Right ventricle myocardium inferior (tissue), 1 donor: ENCODE measurements at regions of chr14 and their contacts with region 1.

Region 1: DNA sequence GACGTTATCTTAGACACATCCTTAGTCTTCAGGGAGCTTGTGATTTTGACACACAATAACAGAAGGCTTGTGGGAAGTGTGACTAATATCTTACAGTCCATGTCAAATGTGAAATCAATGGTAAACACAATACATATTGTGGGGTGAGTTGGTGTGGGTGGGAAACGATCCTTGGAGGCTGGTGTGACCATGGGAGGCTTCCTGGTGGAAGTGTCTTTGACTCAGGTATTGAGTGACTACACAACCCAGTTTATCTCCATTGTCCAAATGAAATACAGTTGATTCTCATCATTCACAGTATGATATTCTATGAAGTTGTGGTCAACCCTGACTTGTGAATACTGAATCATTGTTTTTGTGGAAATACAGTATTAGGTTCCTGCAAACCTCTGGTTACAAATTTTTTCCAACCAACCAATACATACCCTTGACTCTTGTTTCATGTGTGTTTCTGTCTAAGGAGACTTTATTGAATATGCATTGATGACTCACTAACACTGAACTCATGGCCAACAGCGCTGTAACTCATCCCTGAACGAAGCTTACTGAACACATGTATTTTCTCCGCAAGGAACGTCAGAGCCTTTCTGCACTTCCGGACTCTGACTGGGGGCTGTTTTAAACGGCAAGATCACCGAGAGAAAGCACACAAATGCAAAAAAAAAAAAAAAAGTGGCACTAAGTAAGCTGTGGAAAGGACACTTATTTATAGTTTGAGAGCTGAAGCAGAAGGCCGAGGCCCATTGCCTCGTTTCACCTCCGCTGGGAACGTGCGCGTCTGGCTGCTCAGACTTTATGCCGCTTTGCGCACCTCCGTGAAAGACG is 59.0 kb downstream of the CLMN start:
- DNase-seq: no peak
- ATAC-seq: peak; percentile 41

Region 2: GRCh38 chr14:95157327-95158189 is 103.2 kb before region 1 on chr14 and contains the start of gene DICER1:
- intact Hi-C with region 1: loop called (anchors 2 kb)
- DNase-seq: peak; percentile 97
- ATAC-seq: peak; percentile 99
- total RNA-seq, gene DICER1: 20.7 TPM

Region 3: DNA sequence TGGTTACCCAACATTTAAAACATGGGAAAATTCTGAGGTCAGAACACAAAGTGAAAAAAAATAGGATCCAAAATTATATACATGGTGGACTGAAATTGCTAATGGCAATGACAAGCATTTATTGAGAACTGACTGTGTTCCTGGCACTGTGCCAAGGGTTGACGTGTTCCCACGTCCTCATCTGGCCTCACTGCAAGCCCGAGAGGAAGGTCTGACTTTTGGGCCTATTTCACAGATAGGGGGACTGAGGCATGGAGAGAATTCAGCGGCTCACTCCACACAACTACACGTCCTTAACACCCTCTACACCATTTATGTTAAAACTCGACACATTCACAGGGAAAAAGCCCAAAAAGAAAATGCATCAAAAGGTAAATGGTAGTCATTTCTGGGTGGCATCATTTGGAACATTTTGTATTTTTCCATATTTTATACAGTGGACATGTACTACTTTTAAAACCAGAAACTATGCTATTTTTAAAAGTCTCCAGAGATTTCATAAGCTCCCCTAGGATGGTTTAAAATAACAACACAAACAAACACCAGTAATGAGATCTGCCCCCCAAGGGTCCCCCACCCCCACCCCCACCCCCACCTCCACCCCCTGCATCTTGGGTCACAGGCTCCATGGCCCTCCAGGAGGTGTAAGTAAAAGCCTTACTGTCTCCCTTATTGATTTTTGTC is 31.3 kb after region 1 on chr14:
- intact Hi-C with region 1: no loop called
- DNase-seq: peak; percentile 84
- ATAC-seq: peak; percentile 45

Region 4: DNA sequence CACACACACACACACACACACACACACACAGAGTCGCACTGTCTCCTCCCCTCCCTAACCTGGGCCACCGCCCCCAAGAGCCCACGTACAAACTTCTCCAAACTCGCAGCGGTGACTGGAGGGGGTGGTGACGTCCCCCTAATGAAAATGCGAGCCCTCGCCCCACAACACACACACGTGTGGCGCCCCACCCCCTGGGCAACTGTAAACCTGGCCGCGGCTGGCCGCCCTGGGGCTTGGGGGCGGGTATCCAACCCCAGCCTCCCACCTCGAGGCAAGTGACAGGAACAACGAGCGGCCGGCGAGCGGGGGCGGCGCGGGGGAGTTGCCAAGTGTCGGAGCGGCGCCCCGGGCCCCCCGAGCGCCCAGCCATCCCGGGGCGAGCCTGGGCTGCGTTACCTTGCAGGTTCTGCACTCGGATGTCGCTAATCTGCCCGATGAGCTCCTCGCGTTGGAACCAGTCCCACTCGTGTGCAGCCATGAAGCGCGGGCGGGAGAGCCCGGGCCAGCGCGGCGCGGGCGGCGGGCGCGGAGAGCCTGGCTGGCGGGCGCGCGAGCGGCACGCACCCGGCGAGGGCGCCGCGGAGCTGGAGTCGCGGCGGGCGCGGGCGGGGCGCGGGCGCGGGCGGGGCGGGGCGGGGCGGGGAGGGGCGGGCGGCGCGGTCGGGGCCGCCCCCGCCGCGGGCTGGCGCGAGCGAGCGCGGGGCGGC is 58.7 kb after region 1 on chr14 and contains the start of gene CLMN:
- intact Hi-C with region 1: no loop called
- DNase-seq: no peak
- ATAC-seq: peak; percentile 51
- total RNA-seq, gene CLMN: 7.6 TPM

Region 5: DNA sequence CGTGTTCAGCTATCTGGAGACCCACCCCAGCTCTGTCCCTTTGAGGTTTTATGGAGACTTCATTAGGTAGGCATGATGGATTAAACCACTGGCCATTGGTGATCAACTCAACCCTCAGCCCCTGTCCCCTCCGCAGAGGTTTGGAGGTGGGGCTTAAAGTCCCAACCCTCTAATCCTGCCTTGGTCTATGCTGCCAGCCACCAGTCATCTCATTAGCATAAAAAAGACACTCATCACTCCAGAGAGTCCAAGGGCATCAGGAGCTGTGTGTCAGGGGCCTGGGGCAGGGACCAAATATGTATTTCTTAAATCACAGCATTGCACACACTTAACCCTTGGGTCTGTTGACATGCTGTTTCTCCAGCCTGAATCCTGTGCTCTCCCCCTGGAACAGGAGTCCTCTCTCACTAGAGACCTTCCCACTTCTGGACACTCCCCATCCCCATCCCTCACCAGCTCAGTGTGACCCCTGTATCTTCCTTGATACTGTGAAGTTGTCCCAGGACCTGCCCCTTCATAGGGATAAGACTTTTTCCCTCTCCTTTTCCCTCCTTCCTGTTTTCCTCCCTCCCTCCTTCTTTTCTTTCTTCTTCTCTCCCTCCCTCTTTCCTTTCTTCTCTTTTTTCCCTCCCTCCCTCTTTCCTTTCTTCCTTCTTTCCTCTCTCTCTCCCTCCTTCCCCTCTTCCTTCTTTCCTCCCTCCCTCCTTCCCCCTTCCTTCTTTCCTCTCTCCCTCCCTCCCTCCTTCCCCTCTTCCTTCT is 113.7 kb after region 1 on chr14:
- intact Hi-C with region 1: no loop called
- DNase-seq: no peak
- ATAC-seq: no peak